CD4-positive, alpha-beta memory T cell (primary cell): ENCODE measurements at regions of chr7 and their contacts with region 1.

Region 1: GRCh38 chr7:38369816-38370493 is 96.5 kb upstream of the TARP start:
- DNase-seq: peak; percentile 50 to 78 (median 66)
- H3K4me3 ChIP-seq: no peak overlapping the region
- H3K4me3 Mint-ChIP-seq: peak overlapping the region in 6 of 8 donors; percentile 30 to 70 (median 59)
- H3K27ac ChIP-seq: peak overlapping the region; percentile 33
- H3K27ac Mint-ChIP-seq: peak overlapping the region; percentile 24 to 96 (median 81)
- H3K4me1 ChIP-seq: peaks cover 62% of the 10 kb centered on the region
- H3K4me1 Mint-ChIP-seq: peaks cover 45 to 80% (median 54%) of the 10 kb centered on the region in 4 donors
- H3K27me3 ChIP-seq: no peaks in the 10 kb centered on the region
- H3K27me3 Mint-ChIP-seq: no peaks in the 10 kb centered on the region

Region 2: GRCh38 chr7:38186593-38187314 is 183.2 kb before region 1 on chr7:
- CTCF ChIA-PET with region 1: interaction called, 22 read pairs
- POLR2A ChIA-PET with region 1: no interaction called
- intact Hi-C with region 1: no loop called
- DNase-seq: no peak
- H3K4me3 ChIP-seq: no peak overlapping the region
- H3K4me3 Mint-ChIP-seq: no peak overlapping the region
- H3K27ac ChIP-seq: no peak overlapping the region
- H3K27ac Mint-ChIP-seq: no peak overlapping the region
- H3K4me1 ChIP-seq: peaks cover 4% of the 10 kb centered on the region
- H3K4me1 Mint-ChIP-seq: peaks cover 28 to 40% (median 37%) of the 10 kb centered on the region in 4 donors
- H3K27me3 ChIP-seq: no peaks in the 10 kb centered on the region
- H3K27me3 Mint-ChIP-seq: no peaks in the 10 kb centered on the region

Region 3: DNA sequence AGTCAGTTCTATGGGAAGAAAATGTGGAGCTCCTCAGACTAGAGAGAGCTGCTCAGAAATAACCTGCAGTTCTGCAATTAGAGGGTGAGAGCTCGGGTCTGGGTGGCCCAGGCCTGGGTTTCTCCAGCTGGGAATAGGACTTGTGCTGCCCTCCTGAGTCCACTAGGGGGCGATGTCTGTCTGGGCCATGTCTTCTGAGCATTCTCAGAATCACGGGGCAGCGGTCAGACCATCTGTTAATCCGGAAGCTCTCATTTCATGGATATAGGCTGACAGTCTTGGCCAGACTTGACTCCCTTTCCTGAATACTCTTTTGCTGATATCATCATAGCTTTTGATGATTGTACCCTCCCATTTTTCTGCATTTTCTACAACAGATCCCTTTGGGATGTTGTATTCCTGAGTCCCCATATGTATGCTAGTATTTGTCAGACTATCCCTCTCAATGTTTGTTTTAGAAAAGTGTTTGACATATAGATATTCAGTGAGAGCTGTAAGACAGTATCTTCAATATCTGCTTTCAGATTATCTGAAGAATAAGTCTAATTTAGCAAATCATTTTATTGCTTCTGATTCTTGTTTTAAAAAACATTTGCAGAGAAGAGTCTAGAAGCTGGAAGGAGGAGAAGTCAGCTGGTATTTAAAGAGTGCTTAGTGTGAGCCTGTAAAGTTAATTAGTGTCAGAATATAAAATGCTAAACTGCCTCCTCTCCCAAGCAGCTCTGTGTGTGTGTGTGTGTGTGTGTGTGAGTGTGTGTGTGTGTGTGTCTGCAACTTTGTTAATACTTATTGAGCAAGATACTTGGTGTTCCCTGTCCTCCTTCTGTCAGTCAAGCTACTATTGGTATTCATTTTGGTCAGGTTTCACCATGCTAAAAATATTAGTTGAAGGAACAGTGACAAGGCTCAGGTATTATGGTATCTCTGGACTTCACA is 154.0 kb before region 1 on chr7:
- CTCF ChIA-PET with region 1: interaction called, 758 read pairs
- POLR2A ChIA-PET with region 1: interaction called, 36 read pairs
- intact Hi-C with region 1: loop called (anchors 1 kb)
- DNase-seq: peak; percentile 72 to 76 (median 75)
- H3K4me3 ChIP-seq: no peak overlapping the region
- H3K4me3 Mint-ChIP-seq: peak overlapping the region in 7 of 8 donors; percentile 4 to 87 (median 56)
- H3K27ac ChIP-seq: peak overlapping the region; percentile 1
- H3K27ac Mint-ChIP-seq: peak overlapping the region; percentile 43 to 90 (median 83)
- H3K4me1 ChIP-seq: peaks cover 41% of the 10 kb centered on the region
- H3K4me1 Mint-ChIP-seq: peaks cover 24 to 47% (median 36%) of the 10 kb centered on the region in 4 donors
- H3K27me3 ChIP-seq: no peaks in the 10 kb centered on the region
- H3K27me3 Mint-ChIP-seq: no peaks in the 10 kb centered on the region

Region 4: DNA sequence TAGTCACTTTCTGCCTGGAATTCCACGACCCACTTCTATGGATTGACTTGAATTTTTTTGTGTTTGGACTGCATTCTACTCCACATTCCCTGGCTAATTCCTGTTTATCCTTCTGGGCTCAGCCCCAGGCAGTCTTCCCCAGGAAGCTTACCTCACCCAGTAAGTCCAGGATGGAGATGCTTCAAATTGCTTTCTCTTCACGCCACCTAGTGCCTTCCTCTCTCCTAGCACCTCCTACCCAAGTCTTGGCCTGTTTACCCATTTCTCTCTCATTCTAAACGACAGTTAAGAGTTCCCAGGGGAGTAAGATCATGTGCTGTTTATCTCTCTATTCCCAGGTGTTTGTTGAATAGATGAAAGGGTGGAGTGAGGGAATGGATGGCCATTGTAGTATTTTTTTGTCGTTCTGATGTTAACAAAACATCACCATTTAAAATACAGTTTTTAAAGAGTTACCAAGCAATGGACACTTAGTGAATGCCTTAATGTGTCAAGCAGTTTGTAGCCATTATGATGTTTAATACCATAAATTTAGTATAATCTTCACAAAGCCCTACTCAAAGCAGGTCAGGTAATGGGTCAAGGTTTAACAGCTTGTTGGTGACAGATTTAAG is 51.0 kb before region 1 on chr7:
- CTCF ChIA-PET with region 1: interaction called, 13 read pairs
- POLR2A ChIA-PET with region 1: no interaction called
- intact Hi-C with region 1: no loop called
- DNase-seq: no peak
- H3K4me3 ChIP-seq: no peak overlapping the region
- H3K4me3 Mint-ChIP-seq: peak overlapping the region; percentile 70 to 87 (median 72)
- H3K27ac ChIP-seq: peak overlapping the region; percentile 31
- H3K27ac Mint-ChIP-seq: peak overlapping the region; percentile 72 to 90 (median 87)
- H3K4me1 ChIP-seq: peaks cover 36% of the 10 kb centered on the region
- H3K4me1 Mint-ChIP-seq: peaks cover 15 to 43% (median 22%) of the 10 kb centered on the region in 4 donors
- H3K27me3 ChIP-seq: no peaks in the 10 kb centered on the region
- H3K27me3 Mint-ChIP-seq: no peaks in the 10 kb centered on the region

Region 5: DNA sequence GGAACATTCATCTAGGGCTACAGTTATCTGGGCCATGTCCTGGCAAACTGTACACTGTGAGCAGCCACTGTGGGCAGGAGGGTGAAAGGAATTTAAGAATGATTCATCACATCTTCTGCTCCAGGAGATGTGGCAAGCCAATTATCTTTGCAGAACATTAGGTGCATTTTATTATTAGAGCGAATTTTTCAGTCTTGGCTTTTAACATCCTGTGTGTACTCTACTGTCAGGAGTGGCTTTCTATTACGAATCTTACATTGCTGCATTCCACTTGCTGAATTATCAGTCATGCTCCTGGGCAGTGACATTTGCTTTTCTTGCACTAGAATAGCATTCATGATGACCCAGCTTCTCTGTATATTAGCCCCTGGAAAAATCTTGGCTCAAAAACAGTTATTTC is 12.7 kb after region 1 on chr7:
- CTCF ChIA-PET with region 1: interaction called, 103 read pairs
- POLR2A ChIA-PET with region 1: interaction called, 3 read pairs
- intact Hi-C with region 1: no loop called
- DNase-seq: no peak
- H3K4me3 ChIP-seq: no peak overlapping the region
- H3K4me3 Mint-ChIP-seq: no peak overlapping the region
- H3K27ac ChIP-seq: no peak overlapping the region
- H3K27ac Mint-ChIP-seq: no peak overlapping the region
- H3K4me1 ChIP-seq: no peaks in the 10 kb centered on the region
- H3K4me1 Mint-ChIP-seq: peaks cover 0 to 15% (median 7%) of the 10 kb centered on the region in 4 donors
- H3K27me3 ChIP-seq: no peaks in the 10 kb centered on the region
- H3K27me3 Mint-ChIP-seq: no peaks in the 10 kb centered on the region

Region 6: GRCh38 chr7:39602351-39602750 is 1232.4 kb after region 1 on chr7:
- CTCF ChIA-PET with region 1: no interaction called
- POLR2A ChIA-PET with region 1: no interaction called
- intact Hi-C with region 1: no loop called
- DNase-seq: no peak
- H3K4me3 ChIP-seq: no peak overlapping the region
- H3K4me3 Mint-ChIP-seq: no peak overlapping the region
- H3K27ac ChIP-seq: no peak overlapping the region
- H3K27ac Mint-ChIP-seq: no peak overlapping the region
- H3K4me1 ChIP-seq: peaks cover 22% of the 10 kb centered on the region
- H3K4me1 Mint-ChIP-seq: peaks cover 20 to 43% (median 27%) of the 10 kb centered on the region in 4 donors
- H3K27me3 ChIP-seq: no peaks in the 10 kb centered on the region
- H3K27me3 Mint-ChIP-seq: no peaks in the 10 kb centered on the region